ENCODE measurements at regions of chr3 and their contacts with region 1.

Region 1: GRCh38 chr3:16600780-16601539 is 4.3 kb downstream of the DAZL start:
- DNase-seq: peak; percentile 60 to 89 (median 85)
- ATAC-seq: peak; percentile 54
- H3K4me3 ChIP-seq: no peak overlapping the region
- H3K4me3 Mint-ChIP-seq: no peak overlapping the region
- H3K27ac ChIP-seq: no peak overlapping the region
- H3K27ac Mint-ChIP-seq: no peak overlapping the region
- H3K4me1 ChIP-seq: no peaks in the 10 kb centered on the region
- H3K4me1 Mint-ChIP-seq: peaks cover 8% of the 10 kb centered on the region
- H3K27me3 ChIP-seq: no peaks in the 10 kb centered on the region
- H3K27me3 Mint-ChIP-seq: no peaks in the 10 kb centered on the region
- CTCF ChIP-seq: peak; percentile 92

Region 2: DNA sequence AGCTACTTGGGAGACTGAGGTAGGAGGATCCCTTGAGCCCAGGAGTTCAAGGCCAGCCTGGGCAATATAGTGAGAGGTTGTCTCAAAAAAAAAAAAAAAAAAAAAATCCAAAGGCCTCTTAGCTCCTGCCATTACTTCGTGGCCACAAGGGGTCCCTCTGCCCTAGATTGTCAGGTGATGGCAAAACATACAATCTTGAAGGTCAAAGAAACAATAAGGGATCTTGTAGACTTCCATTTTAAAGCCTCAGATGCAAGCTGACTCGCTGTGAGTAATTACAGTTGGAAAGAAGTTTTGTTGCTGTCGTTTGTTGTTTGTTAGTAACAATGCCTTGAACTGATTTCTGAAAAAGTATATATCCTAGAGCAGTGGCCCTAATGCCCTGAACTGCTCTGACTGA is 227.9 kb after region 1 on chr3:
- CTCF ChIA-PET with region 1: interaction called, 8 read pairs
- POLR2A ChIA-PET with region 1: no interaction called
- intact Hi-C with region 1: loop called in 1 of 2 experiments (anchors 10 kb)
- DNase-seq: peak in 8 of 9 experiments; percentile 34 to 80 (median 60)
- ATAC-seq: peak; percentile 73
- H3K4me3 ChIP-seq: no peak overlapping the region
- H3K4me3 Mint-ChIP-seq: no peak overlapping the region
- H3K27ac ChIP-seq: no peak overlapping the region
- H3K27ac Mint-ChIP-seq: peak overlapping the region; percentile 60
- H3K4me1 ChIP-seq: peaks cover 15% of the 10 kb centered on the region
- H3K4me1 Mint-ChIP-seq: peaks cover 26% of the 10 kb centered on the region
- H3K27me3 ChIP-seq: no peaks in the 10 kb centered on the region
- H3K27me3 Mint-ChIP-seq: no peaks in the 10 kb centered on the region
- CTCF ChIP-seq: peak; percentile 37

Region 3: GRCh38 chr3:17032407-17033034 is 431.6 kb after region 1 on chr3:
- CTCF ChIA-PET with region 1: no interaction called
- POLR2A ChIA-PET with region 1: no interaction called
- intact Hi-C with region 1: loop called in 1 of 2 experiments (anchors 10 kb)
- DNase-seq: peak in 2 of 9 experiments; percentile 13 to 24
- ATAC-seq: peak; percentile 31
- H3K4me3 ChIP-seq: no peak overlapping the region
- H3K4me3 Mint-ChIP-seq: no peak overlapping the region
- H3K27ac ChIP-seq: no peak overlapping the region
- H3K27ac Mint-ChIP-seq: no peak overlapping the region
- H3K4me1 ChIP-seq: peaks cover 22% of the 10 kb centered on the region
- H3K4me1 Mint-ChIP-seq: peaks cover 81% of the 10 kb centered on the region
- H3K27me3 ChIP-seq: no peaks in the 10 kb centered on the region
- H3K27me3 Mint-ChIP-seq: no peaks in the 10 kb centered on the region
- CTCF ChIP-seq: peak; percentile 36

Region 4: DNA sequence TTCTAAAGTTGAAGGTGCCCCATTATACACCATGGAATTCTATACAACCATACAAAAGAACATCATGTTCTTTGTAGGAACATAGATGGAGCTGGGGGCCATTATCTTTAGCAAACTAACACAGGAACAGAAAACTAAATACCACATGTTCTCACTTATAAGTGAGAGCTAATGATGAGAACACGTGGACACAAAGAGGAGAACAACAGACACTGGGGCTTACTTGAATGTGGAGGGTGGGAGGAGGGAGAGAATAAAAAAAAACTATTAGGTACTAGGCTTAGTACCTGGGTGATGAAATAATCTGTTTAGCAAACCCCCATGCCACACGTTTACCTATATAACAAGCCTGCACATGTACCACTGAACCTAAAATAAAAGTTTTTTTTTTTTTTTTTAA is 626.5 kb after region 1 on chr3:
- CTCF ChIA-PET with region 1: interaction called, 65 read pairs
- POLR2A ChIA-PET with region 1: no interaction called
- intact Hi-C with region 1: no loop called
- DNase-seq: no peak
- ATAC-seq: no peak
- H3K4me3 ChIP-seq: no peak overlapping the region
- H3K4me3 Mint-ChIP-seq: no peak overlapping the region
- H3K27ac ChIP-seq: no peak overlapping the region
- H3K27ac Mint-ChIP-seq: no peak overlapping the region
- H3K4me1 ChIP-seq: no peaks in the 10 kb centered on the region
- H3K4me1 Mint-ChIP-seq: no peaks in the 10 kb centered on the region
- H3K27me3 ChIP-seq: no peaks in the 10 kb centered on the region
- H3K27me3 Mint-ChIP-seq: no peaks in the 10 kb centered on the region
- CTCF ChIP-seq: no peak

Region 5: DNA sequence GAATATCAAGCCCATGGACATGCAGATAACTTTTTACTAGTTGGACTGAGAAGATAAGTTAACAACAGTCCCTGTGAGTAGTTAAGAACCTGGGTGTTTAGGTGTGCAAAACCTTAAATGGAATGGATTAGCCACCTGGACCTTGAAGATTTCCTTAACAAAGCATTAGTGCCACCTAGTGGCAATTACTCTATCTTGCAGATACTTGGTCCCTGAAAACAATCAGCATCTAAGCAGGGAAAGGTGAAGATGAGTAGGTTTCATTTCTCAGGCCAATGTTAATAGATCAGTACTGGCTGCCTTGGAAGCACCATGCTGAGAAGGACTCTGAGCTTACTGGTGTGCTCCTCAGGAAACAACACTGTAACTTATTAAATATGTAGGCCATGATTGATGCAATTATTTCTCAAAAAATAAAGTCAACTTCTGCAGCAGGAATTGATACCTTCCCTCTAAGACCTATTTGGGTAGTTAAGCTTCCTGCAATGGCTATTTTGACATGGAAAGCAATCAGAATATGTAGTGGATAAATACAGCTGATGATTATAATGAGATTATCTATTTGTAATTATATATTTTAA is 812.1 kb after region 1 on chr3:
- CTCF ChIA-PET with region 1: interaction called, 22 read pairs
- POLR2A ChIA-PET with region 1: no interaction called
- intact Hi-C with region 1: loop called (anchors 1 kb)
- DNase-seq: peak in 4 of 9 experiments; percentile 9 to 67 (median 35)
- ATAC-seq: no peak
- H3K4me3 ChIP-seq: no peak overlapping the region
- H3K4me3 Mint-ChIP-seq: no peak overlapping the region
- H3K27ac ChIP-seq: no peak overlapping the region
- H3K27ac Mint-ChIP-seq: no peak overlapping the region
- H3K4me1 ChIP-seq: no peaks in the 10 kb centered on the region
- H3K4me1 Mint-ChIP-seq: no peaks in the 10 kb centered on the region
- H3K27me3 ChIP-seq: no peaks in the 10 kb centered on the region
- H3K27me3 Mint-ChIP-seq: no peaks in the 10 kb centered on the region
- CTCF ChIP-seq: peak; percentile 71

Measured in CD8-positive, alpha-beta T cell (primary cell).